GM12878 (cell line): ENCODE measurements at regions of chr2 and their contacts with region 1.

Region 1: DNA sequence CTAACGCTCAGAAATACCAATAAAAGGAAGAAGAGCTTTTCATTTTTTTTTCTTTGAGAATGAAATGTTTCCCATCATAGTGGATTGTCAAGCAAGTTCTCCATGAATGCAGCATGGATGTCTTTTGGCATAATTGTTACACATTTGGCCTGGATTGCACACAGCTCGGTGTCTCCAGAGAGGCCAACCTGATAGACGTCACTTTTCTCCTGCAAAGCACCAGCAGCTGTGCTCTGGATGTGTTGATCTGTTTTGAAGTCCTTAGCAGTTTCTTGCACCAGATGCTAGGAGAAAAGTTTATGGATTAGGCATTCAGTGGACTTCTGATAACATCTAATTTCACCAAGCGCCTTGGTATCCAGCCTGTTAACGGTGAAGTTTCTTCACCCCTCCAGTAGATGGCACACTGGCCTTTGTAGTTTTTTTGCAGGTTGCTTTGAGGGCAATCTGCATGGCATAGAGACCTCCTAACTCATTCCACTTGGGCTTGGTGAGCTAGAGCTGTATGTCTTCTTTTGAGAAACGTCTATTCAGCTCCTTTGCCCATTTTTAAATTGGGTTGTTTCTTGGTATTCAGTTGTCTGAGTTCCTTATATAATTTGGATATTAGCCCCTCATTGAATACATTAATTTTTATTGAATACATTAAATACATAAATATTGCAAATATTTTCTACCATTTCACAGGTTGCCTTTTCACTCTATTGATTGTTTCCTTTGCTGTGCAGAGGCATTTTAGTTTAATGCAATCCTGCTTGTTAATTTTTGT is 59.7 kb downstream of the PTH2R start:
- DNase-seq: no peak
- ATAC-seq: peak; percentile 85
- H3K4me3 ChIP-seq: no peak overlapping the region
- H3K27ac ChIP-seq: no peak overlapping the region
- H3K4me1 ChIP-seq: no peaks in the 10 kb centered on the region
- H3K27me3 ChIP-seq: no peaks in the 10 kb centered on the region; a peak in 1 of 4 replicates
- CTCF ChIP-seq: peak; percentile 67 to 69 (median 68); a peak in 5 of 6 replicates
- EP300 ChIP-seq: no peak
- POLR2A ChIP-seq: no peak
- RAD21 ChIP-seq: peak; percentile 77

Region 2: GRCh38 chr2:207950063-207950760 is 516.1 kb before region 1 on chr2:
- CTCF ChIA-PET with region 1: no interaction called
- POLR2A ChIA-PET with region 1: no interaction called
- RAD21 ChIA-PET with region 1: no interaction called
- SMC1A ChIA-PET with region 1: no interaction called
- in situ Hi-C with region 1: no loop called
- intact Hi-C with region 1: no loop called
- DNase-seq: no peak
- ATAC-seq: no peak
- H3K4me3 ChIP-seq: no peak overlapping the region
- H3K27ac ChIP-seq: no peak overlapping the region
- H3K4me1 ChIP-seq: peaks cover 10% of the 10 kb centered on the region; the same call in 1 of the 2 replicates
- H3K27me3 ChIP-seq: no peaks in the 10 kb centered on the region
- CTCF ChIP-seq: no peak
- EP300 ChIP-seq: no peak
- POLR2A ChIP-seq: no peak
- RAD21 ChIP-seq: no peak

Region 3: GRCh38 chr2:208451061-208451460 is 15.3 kb before region 1 on chr2:
- CTCF ChIA-PET with region 1: interaction called, 10 read pairs
- POLR2A ChIA-PET with region 1: no interaction called
- RAD21 ChIA-PET with region 1: interaction called, 3 read pairs
- SMC1A ChIA-PET with region 1: interaction called, 4 read pairs
- in situ Hi-C with region 1: no loop called
- intact Hi-C with region 1: no loop called
- DNase-seq: no peak
- ATAC-seq: no peak
- H3K4me3 ChIP-seq: no peak overlapping the region
- H3K27ac ChIP-seq: no peak overlapping the region
- H3K4me1 ChIP-seq: no peaks in the 10 kb centered on the region
- H3K27me3 ChIP-seq: no peaks in the 10 kb centered on the region
- CTCF ChIP-seq: no peak
- EP300 ChIP-seq: no peak
- POLR2A ChIP-seq: no peak
- RAD21 ChIP-seq: no peak

Region 4: DNA sequence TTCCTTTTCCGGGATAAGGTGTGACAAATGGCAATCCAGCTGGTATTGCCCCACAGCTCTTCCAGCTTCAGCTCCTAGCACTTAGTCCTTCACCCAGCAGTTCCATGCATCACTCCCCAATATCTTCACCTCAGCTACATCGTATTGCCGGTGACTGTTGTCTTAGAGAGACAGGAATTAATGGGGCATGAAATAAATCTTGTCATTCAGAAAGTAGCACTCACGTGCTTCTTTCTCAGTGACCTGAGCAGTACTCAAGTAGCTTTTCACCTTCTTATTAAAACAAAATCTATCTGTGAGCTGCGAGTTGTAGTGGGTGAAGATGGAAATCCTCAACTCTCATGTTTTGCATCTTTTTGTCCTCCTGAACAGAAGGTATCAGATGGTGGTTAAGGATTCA is 13.0 kb after region 1 on chr2:
- CTCF ChIA-PET with region 1: interaction called, 14 read pairs
- POLR2A ChIA-PET with region 1: no interaction called
- RAD21 ChIA-PET with region 1: no interaction called
- SMC1A ChIA-PET with region 1: interaction called, 4 read pairs
- in situ Hi-C with region 1: no loop called
- intact Hi-C with region 1: no loop called
- DNase-seq: no peak
- ATAC-seq: peak; percentile 65
- H3K4me3 ChIP-seq: no peak overlapping the region
- H3K27ac ChIP-seq: no peak overlapping the region
- H3K4me1 ChIP-seq: no peaks in the 10 kb centered on the region; the same call in 1 of the 2 replicates
- H3K27me3 ChIP-seq: 0 out of 4 replicates have a peak, but pooled peaks cover 0 to 2% of the 10 kb centered on the region in 2 experiments
- CTCF ChIP-seq: no peak
- EP300 ChIP-seq: no peak
- POLR2A ChIP-seq: no peak
- RAD21 ChIP-seq: no peak

Region 5: DNA sequence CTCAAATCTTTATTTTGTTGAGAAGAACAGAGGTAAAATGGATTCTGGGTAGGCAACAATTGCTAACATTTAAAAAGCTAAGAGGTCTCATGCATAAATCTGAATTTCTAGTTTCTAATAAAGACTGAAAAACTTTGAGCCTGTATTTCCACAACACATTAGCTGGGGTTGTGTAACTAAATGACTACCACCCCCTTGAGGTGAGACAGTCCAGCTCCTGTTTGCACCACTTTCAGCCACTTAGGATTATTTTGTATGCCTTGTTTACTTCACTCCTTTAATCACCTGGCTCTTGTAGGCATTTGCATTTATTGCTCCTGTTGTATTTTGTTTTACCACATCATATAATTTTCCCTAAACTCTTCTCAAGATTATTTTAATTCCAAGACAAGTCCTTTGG is 316.9 kb after region 1 on chr2:
- CTCF ChIA-PET with region 1: interaction called, 3 read pairs
- POLR2A ChIA-PET with region 1: no interaction called
- RAD21 ChIA-PET with region 1: no interaction called
- SMC1A ChIA-PET with region 1: interaction called, 3 read pairs
- in situ Hi-C with region 1: no loop called
- intact Hi-C with region 1: loop called (anchors 5 kb)
- DNase-seq: no peak
- ATAC-seq: no peak
- H3K4me3 ChIP-seq: no peak overlapping the region
- H3K27ac ChIP-seq: no peak overlapping the region
- H3K4me1 ChIP-seq: no peaks in the 10 kb centered on the region
- H3K27me3 ChIP-seq: no peaks in the 10 kb centered on the region
- CTCF ChIP-seq: 0 out of 6 replicates have a peak, but pooled peaks of 1 of the 3 experiments have one; percentile 9
- EP300 ChIP-seq: no peak
- POLR2A ChIP-seq: no peak
- RAD21 ChIP-seq: 0 out of 2 replicates have a peak, but pooled peaks have one; percentile 12

Region 6: DNA sequence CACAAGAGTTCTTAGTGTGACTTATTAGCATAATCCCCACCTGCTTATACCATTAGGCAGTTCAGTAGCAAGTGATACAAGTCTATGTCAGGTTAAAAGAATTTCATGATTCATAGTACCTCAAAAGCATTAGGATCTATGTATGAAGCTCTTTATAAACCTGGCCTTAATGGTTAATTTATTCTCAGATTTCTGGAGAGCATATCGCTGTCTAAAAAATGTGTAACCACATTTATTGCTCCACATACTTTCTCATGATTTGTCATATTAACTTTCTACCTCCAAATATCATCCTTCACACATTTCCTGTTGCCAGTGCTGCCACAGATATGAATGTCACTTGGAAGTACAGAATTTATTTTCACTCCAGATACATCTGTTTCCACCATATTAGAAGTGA is 624.7 kb after region 1 on chr2:
- CTCF ChIA-PET with region 1: no interaction called
- POLR2A ChIA-PET with region 1: no interaction called
- RAD21 ChIA-PET with region 1: no interaction called
- SMC1A ChIA-PET with region 1: no interaction called
- in situ Hi-C with region 1: no loop called
- intact Hi-C with region 1: loop called (anchors 10 kb)
- DNase-seq: no peak
- ATAC-seq: no peak
- H3K4me3 ChIP-seq: no peak overlapping the region
- H3K27ac ChIP-seq: no peak overlapping the region
- H3K4me1 ChIP-seq: no peaks in the 10 kb centered on the region
- H3K27me3 ChIP-seq: no peaks in the 10 kb centered on the region
- CTCF ChIP-seq: no peak
- EP300 ChIP-seq: no peak
- POLR2A ChIP-seq: no peak
- RAD21 ChIP-seq: no peak

Region 7: GRCh38 chr2:209208211-209208610 is 741.9 kb after region 1 on chr2:
- CTCF ChIA-PET with region 1: interaction called, 7 read pairs
- POLR2A ChIA-PET with region 1: no interaction called
- RAD21 ChIA-PET with region 1: interaction called, 5 read pairs
- SMC1A ChIA-PET with region 1: interaction called, 6 read pairs
- in situ Hi-C with region 1: loop called (anchors 10 kb)
- intact Hi-C with region 1: loop called (anchors 1 kb)
- DNase-seq: no peak
- ATAC-seq: peak; percentile 76
- H3K4me3 ChIP-seq: no peak overlapping the region
- H3K27ac ChIP-seq: no peak overlapping the region
- H3K4me1 ChIP-seq: no peaks in the 10 kb centered on the region
- H3K27me3 ChIP-seq: no peaks in the 10 kb centered on the region
- CTCF ChIP-seq: peak; percentile 56 to 64 (median 62); a peak in 5 of 6 replicates
- EP300 ChIP-seq: no peak
- POLR2A ChIP-seq: no peak
- RAD21 ChIP-seq: peak; percentile 86

Region 8: GRCh38 chr2:209322041-209322440 is 855.7 kb after region 1 on chr2:
- CTCF ChIA-PET with region 1: no interaction called
- POLR2A ChIA-PET with region 1: no interaction called
- RAD21 ChIA-PET with region 1: no interaction called
- SMC1A ChIA-PET with region 1: no interaction called
- in situ Hi-C with region 1: no loop called
- intact Hi-C with region 1: loop called (anchors 5 kb)
- DNase-seq: no peak
- ATAC-seq: no peak
- H3K4me3 ChIP-seq: no peak overlapping the region
- H3K27ac ChIP-seq: no peak overlapping the region
- H3K4me1 ChIP-seq: no peaks in the 10 kb centered on the region
- H3K27me3 ChIP-seq: no peaks in the 10 kb centered on the region
- CTCF ChIP-seq: no peak
- EP300 ChIP-seq: no peak
- POLR2A ChIP-seq: no peak
- RAD21 ChIP-seq: no peak